WTC11 (cell line): ENCODE measurements at regions of chr6 and their contacts with region 1.

Region 1: GRCh38 chr6:92810913-92811312 is 608.4 kb downstream of the EPHA7 start:
- DNase-seq: peak; percentile 69
- ATAC-seq: peak; percentile 97
- H3K4me3 Mint-ChIP-seq: no peak overlapping the region
- H3K27ac Mint-ChIP-seq: no peak overlapping the region
- H3K4me1 Mint-ChIP-seq: peaks cover 5% of the 10 kb centered on the region
- H3K27me3 Mint-ChIP-seq: no peaks in the 10 kb centered on the region; the same call in none of the 2 replicates
- CTCF ChIP-seq: peak; percentile 65

Region 2: DNA sequence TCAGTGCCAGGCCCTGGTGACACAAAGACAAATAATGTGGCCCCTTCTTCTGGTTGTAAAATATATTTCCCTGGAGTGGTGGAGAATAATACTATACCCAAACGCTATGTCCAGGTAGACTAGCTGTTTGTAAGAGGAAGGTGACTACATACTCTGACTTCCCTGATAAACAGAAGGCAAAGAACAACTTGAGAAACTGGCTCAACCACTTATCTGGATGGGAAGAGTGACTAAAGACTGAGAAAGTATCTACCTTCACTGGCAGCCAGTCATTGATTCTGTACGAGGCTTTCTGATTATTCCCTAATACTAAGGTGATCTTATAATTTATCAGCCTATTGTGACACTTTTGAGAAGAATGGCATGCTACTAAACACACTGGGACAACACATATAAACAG is 38.7 kb after region 1 on chr6:
- CTCF ChIA-PET with region 1: interaction called, 12 read pairs
- POLR2A ChIA-PET with region 1: no interaction called
- DNase-seq: no peak
- ATAC-seq: no peak
- H3K4me3 Mint-ChIP-seq: no peak overlapping the region
- H3K27ac Mint-ChIP-seq: no peak overlapping the region
- H3K4me1 Mint-ChIP-seq: peaks cover 67% of the 10 kb centered on the region
- H3K27me3 Mint-ChIP-seq: peaks cover 79% of the 10 kb centered on the region
- CTCF ChIP-seq: no peak

Region 3: DNA sequence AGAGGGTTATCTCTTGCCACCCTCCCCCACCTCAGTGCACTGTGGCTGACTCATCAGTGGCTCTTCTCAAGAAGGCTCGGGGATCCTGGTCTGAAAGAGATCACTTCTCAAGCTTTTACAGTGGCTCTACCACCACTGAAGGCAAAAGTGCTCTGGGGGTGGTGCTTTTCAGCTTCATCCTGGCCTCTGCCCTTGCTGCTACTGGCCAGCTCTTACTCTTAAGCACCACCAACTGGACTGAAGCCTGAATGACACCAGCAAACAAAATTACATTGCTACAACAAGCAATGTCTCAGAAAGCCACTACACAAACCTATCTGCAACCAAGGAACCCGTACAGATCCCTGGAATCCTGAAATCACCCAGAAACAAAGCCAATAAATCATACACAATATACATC is 206.3 kb after region 1 on chr6:
- CTCF ChIA-PET with region 1: interaction called, 27 read pairs
- POLR2A ChIA-PET with region 1: no interaction called
- DNase-seq: peak; percentile 30
- ATAC-seq: peak; percentile 97
- H3K4me3 Mint-ChIP-seq: no peak overlapping the region
- H3K27ac Mint-ChIP-seq: no peak overlapping the region
- H3K4me1 Mint-ChIP-seq: peaks cover 20% of the 10 kb centered on the region
- H3K27me3 Mint-ChIP-seq: peaks cover 8% of the 10 kb centered on the region
- CTCF ChIP-seq: no peak